Naive thymus-derived CD4-positive, alpha-beta T cell (primary cell): ENCODE measurements at regions of chr12 and their contacts with region 1.

Region 1: GRCh38 chr12:48489012-48489411 is 6.7 kb downstream of the C12orf54 start:
- DNase-seq: no peak
- ATAC-seq: no peak
- H3K4me3 ChIP-seq: no peak overlapping the region
- H3K4me3 Mint-ChIP-seq: no peak overlapping the region
- H3K27ac ChIP-seq: no peak overlapping the region
- H3K27ac Mint-ChIP-seq: no peak overlapping the region
- H3K4me1 ChIP-seq: no peaks in the 10 kb centered on the region
- H3K4me1 Mint-ChIP-seq: peaks cover 0 to 3% (median 0%) of the 10 kb centered on the region in 7 donors
- H3K27me3 ChIP-seq: no peaks in the 10 kb centered on the region
- H3K27me3 Mint-ChIP-seq: peaks cover 0 to 13% (median 0%) of the 10 kb centered on the region in 5 donors

Region 2: GRCh38 chr12:47302111-47302671 is 1186.8 kb before region 1 on chr12:
- CTCF ChIA-PET with region 1: no interaction called
- POLR2A ChIA-PET with region 1: interaction called, 10 read pairs
- intact Hi-C with region 1: no loop called
- DNase-seq: no peak
- ATAC-seq: no peak
- H3K4me3 ChIP-seq: no peak overlapping the region
- H3K4me3 Mint-ChIP-seq: peak overlapping the region in 2 of 10 donors; percentile 21 to 34
- H3K27ac ChIP-seq: no peak overlapping the region
- H3K27ac Mint-ChIP-seq: peak overlapping the region in 6 of 9 donors; percentile 14 to 84 (median 72)
- H3K4me1 ChIP-seq: peaks cover 15 to 34% of the 10 kb centered on the region in 2 donors
- H3K4me1 Mint-ChIP-seq: peaks cover 30 to 78% (median 63%) of the 10 kb centered on the region in 7 donors
- H3K27me3 ChIP-seq: no peaks in the 10 kb centered on the region
- H3K27me3 Mint-ChIP-seq: no peaks in the 10 kb centered on the region